ENCODE measurements at regions of chr19 and their contacts with region 1.

Region 1: DNA sequence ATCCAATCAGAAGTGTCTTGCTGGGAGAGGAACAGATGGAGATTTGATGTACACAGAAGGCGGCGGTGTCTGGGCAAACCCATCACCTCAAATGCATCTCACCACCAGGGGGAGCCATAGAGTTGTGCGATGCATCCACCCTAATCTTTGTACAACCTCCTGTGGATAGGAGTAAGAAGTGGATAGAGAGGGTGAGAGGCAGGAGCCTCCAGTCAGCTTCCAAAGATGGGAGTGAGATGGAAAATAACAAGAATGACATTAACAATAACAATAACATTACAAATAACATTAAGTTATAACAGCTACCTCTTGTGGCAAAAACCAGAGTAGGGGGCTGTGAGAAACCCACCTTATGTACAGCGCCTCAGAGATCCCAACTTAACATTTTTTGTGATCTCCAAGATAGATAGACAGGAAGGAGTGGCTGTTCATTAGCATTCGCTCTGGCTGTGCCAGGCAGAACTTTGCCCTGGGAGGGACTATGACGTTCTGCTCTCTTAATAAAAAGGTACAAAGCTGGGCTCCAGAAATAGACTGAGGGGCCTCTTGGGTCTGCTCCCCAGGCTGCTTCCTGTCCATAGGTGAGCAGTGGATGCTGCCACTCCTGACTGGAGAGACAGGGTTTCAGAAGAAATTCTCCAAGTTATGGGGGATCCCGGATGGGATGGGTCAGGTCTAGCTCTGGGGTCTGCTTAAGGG is 5.2 kb upstream of the CEACAM18 start:
- DNase-seq: peak; percentile 76
- H3K4me3 Mint-ChIP-seq: no peak overlapping the region
- H3K27ac Mint-ChIP-seq: no peak overlapping the region
- H3K4me1 Mint-ChIP-seq: no peaks in the 10 kb centered on the region
- H3K27me3 Mint-ChIP-seq: no peaks in the 10 kb centered on the region
- CTCF ChIP-seq: peak; percentile 89

Region 2: DNA sequence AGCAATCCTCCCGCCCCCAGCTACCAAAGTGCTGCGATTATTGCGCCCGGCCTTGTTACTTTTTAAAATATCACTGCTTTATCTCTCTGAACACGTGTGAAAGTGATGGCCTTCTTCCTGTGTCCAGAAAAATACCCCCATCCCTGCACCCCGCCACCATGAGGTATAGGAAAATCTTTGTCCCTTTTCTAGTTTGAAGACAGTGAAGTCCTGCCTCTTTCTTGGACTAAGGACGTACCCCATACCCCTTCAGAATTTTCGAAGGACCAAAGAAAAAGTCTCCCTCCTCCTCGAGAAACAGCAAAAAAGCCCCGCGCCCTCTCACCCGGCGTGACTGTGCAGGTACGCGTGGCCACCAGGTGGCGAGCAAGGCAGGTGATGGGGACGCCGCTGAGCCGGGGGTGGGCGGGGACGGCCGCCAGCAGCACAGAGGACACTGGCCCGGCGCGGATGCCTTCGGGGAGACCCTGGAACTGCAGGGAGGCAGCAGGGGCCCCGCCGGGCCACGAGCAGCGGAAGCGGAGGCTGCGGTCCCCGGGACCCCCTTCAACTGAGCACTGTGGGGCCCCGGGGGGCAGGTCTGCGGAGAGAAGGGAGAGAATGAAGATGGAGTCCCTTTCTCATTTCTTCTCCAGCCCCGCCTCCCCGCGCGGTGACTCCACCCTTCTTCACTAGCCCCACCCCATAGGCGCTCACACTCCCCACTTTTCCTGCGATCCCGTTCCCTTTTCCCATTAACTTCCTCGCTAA is 134.4 kb before region 1 on chr19:
- CTCF ChIA-PET with region 1: interaction called, 3 read pairs
- POLR2A ChIA-PET with region 1: interaction called, 3 read pairs
- intact Hi-C with region 1: loop called (anchors 1 kb)
- DNase-seq: peak; percentile 83
- H3K4me3 Mint-ChIP-seq: peak overlapping the region; percentile 76
- H3K27ac Mint-ChIP-seq: peak overlapping the region; percentile 33
- H3K4me1 Mint-ChIP-seq: peaks cover 11% of the 10 kb centered on the region
- H3K27me3 Mint-ChIP-seq: no peaks in the 10 kb centered on the region
- CTCF ChIP-seq: peak; percentile 86

Region 3: GRCh38 chr19:51460164-51460992 is 12.8 kb before region 1 on chr19:
- CTCF ChIA-PET with region 1: interaction called, 14 read pairs
- POLR2A ChIA-PET with region 1: no interaction called
- intact Hi-C with region 1: no loop called
- DNase-seq: no peak
- H3K4me3 Mint-ChIP-seq: peak overlapping the region; percentile 10
- H3K27ac Mint-ChIP-seq: no peak overlapping the region
- H3K4me1 Mint-ChIP-seq: no peaks in the 10 kb centered on the region
- H3K27me3 Mint-ChIP-seq: no peaks in the 10 kb centered on the region
- CTCF ChIP-seq: no peak

Region 4: GRCh38 chr19:51485960-51486660 is 13.0 kb after region 1 on chr19:
- CTCF ChIA-PET with region 1: interaction called, 37 read pairs
- POLR2A ChIA-PET with region 1: no interaction called
- intact Hi-C with region 1: no loop called
- DNase-seq: no peak
- H3K4me3 Mint-ChIP-seq: no peak overlapping the region
- H3K27ac Mint-ChIP-seq: no peak overlapping the region
- H3K4me1 Mint-ChIP-seq: no peaks in the 10 kb centered on the region
- H3K27me3 Mint-ChIP-seq: no peaks in the 10 kb centered on the region
- CTCF ChIP-seq: no peak

Region 5: GRCh38 chr19:51514866-51515481 is 41.8 kb after region 1 on chr19:
- CTCF ChIA-PET with region 1: interaction called, 25 read pairs
- POLR2A ChIA-PET with region 1: no interaction called
- intact Hi-C with region 1: no loop called
- DNase-seq: peak; percentile 56
- H3K4me3 Mint-ChIP-seq: no peak overlapping the region
- H3K27ac Mint-ChIP-seq: no peak overlapping the region
- H3K4me1 Mint-ChIP-seq: no peaks in the 10 kb centered on the region
- H3K27me3 Mint-ChIP-seq: no peaks in the 10 kb centered on the region
- CTCF ChIP-seq: peak; percentile 70

Region 6: GRCh38 chr19:51531349-51532315 is 58.5 kb after region 1 on chr19 and contains the start of gene SIGLEC6:
- CTCF ChIA-PET with region 1: no interaction called
- POLR2A ChIA-PET with region 1: no interaction called
- intact Hi-C with region 1: no loop called
- DNase-seq: no peak
- H3K4me3 Mint-ChIP-seq: no peak within 1 kb of the TSS
- H3K27ac Mint-ChIP-seq: no peak within 1 kb of the TSS
- H3K4me1 Mint-ChIP-seq: no peaks in the 10 kb centered on the region
- H3K27me3 Mint-ChIP-seq: no peaks in the 10 kb centered on the region
- CTCF ChIP-seq: no peak
- total RNA-seq, gene SIGLEC6: not detected in 2 replicates

Region 7: DNA sequence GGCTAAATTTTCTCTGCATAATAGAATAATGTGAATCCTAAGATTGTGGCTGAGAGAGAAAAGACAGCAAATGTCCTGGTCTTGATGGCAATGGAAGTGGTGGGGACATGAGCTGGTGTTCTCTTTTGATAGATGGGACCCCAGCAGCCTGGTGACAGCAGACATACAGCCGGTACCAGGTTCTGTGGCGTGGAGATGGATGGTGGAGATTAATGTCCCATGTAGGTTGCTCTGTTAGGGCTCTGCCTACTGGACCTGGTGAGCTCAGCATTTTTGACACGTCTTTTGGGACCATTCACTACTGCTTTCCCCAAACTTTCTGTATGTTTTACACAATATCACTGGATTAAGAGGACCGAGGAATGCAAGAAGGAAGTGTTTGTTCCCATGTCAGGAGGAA is 181.6 kb after region 1 on chr19:
- CTCF ChIA-PET with region 1: interaction called, 66 read pairs
- POLR2A ChIA-PET with region 1: interaction called, 3 read pairs
- intact Hi-C with region 1: loop called (anchors 1 kb)
- DNase-seq: no peak
- H3K4me3 Mint-ChIP-seq: no peak overlapping the region
- H3K27ac Mint-ChIP-seq: no peak overlapping the region
- H3K4me1 Mint-ChIP-seq: peaks cover 7% of the 10 kb centered on the region
- H3K27me3 Mint-ChIP-seq: peaks cover 22% of the 10 kb centered on the region
- CTCF ChIP-seq: no peak